Naive thymus-derived CD4-positive, alpha-beta T cell (primary cell): ENCODE measurements at regions of chr19 and their contacts with region 1.

Region 1: DNA sequence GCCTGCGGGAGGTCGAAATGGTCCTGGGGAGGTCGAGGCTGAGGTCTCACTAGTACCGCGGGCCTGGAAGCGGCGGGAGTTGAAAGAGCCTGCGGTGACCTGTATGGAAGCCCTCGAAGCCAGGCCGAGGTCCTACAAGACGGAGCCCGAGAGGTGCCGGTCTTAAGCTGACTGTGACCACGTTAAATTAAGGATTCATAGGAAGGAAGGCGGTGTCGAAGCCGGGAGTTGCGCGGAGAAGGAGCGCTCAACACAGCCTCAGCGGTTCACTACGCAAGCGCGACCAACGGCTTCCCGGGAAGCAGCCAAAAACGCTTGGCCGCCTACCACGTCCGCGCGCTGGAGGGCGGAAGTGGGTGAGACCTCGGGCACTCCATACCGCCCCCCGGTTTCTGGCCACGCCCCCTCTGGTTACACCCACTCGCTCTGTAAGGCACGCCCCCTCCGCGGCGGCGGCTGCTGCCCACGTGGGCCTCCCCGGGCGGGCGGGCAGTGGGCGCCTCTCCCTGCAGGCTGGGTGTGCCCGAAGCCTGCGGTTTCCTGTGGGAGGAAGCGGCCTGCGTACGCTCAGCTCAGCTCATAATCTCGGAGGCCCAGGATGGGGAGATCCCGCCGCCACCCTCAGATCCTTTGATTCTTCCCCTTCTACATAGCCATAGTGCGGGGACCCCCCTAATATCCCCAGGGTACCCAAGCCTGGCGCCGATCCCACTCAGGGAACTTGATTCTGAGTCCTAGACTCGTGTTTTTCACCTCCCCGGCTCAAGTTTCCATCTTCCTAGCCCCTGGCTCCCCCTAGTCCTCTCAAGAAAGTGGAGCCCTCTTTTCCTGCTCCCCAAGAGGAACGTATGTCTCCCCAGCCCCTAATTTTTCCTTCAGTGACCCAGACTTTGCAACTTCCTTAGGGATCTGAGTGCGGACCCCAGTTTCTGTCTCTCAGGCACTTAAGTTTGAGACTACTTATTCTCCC is 3.4 kb upstream of the EMP3 start:
- DNase-seq: peak; percentile 99 to 100 (median 100)
- ATAC-seq: peak; percentile 87
- H3K4me3 ChIP-seq: peak overlapping the region; percentile 79
- H3K4me3 Mint-ChIP-seq: peak overlapping the region; percentile 90 to 99 (median 96)
- H3K27ac ChIP-seq: peak overlapping the region; percentile 100
- H3K27ac Mint-ChIP-seq: peak overlapping the region; percentile 96 to 100 (median 99)
- H3K4me1 ChIP-seq: peaks cover 45 to 47% of the 10 kb centered on the region in 2 donors
- H3K4me1 Mint-ChIP-seq: peaks cover 36 to 63% (median 51%) of the 10 kb centered on the region in 7 donors
- H3K27me3 ChIP-seq: no peaks in the 10 kb centered on the region
- H3K27me3 Mint-ChIP-seq: peaks cover 0 to 2% (median 0%) of the 10 kb centered on the region in 5 donors

Region 2: DNA sequence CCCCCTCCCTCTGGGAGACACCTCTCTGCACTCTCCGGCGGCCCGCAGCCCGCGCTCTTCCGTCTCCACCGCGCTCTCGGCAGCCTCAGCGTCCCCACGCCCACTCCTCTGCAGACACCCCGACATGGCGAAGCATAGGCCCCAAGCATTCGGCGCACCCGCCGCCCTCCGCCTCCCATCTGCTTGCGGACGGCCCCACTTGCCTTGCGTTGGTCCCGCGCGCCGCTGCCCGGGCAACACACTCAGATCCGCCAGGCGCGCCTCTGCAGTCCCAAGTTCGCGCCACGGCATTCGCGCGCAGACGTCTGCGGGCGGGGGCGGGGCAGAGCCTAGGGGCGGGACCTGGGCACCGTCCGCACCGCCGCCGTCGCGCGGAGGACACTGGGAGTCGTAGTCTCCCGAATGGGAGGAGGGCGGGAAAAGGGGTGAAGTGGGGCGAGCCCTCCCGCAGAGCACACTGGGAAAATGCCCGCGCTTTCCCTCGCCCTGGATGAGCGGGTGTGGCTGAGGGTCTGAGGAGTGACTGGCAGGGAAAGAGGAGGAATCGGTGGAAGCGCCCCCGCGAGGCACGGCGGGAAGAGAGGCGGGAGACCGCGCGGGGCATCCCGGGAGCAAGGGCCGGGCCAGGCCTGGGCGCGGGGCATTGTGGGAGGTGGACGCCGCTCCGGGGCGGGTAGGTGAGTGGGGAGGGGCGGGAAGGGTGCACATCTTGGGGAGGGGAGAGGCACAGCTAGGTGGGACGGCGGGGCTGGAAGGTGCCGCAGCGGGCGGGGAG is 151.7 kb before region 1 on chr19 and contains the starts of genes LIG1 and ZSWIM9:
- CTCF ChIA-PET with region 1: no interaction called
- POLR2A ChIA-PET with region 1: no interaction called
- intact Hi-C with region 1: loop called (anchors 1 kb)
- DNase-seq: peak; percentile 87 to 96 (median 94)
- ATAC-seq: peak; percentile 89
- H3K4me3 ChIP-seq: peak within 1 kb of the TSS; percentile 98
- H3K4me3 Mint-ChIP-seq: peak within 1 kb of the TSS; percentile 90 to 100 (median 97)
- H3K27ac ChIP-seq: peak within 1 kb of the TSS; percentile 94
- H3K27ac Mint-ChIP-seq: peak within 1 kb of the TSS; percentile 92 to 100 (median 97)
- H3K4me1 ChIP-seq: peaks cover 14 to 16% of the 10 kb centered on the region in 2 donors
- H3K4me1 Mint-ChIP-seq: peaks cover 20 to 44% (median 32%) of the 10 kb centered on the region in 7 donors
- H3K27me3 ChIP-seq: no peaks in the 10 kb centered on the region
- H3K27me3 Mint-ChIP-seq: no peaks in the 10 kb centered on the region
- total RNA-seq, gene LIG1: 61.0 to 134 (median 122) TPM
- total RNA-seq, gene ZSWIM9: 5.0 to 11.6 (median 7.4) TPM

Region 3: GRCh38 chr19:48333467-48334384 is 11.8 kb after region 1 on chr19:
- CTCF ChIA-PET with region 1: interaction called, 217 read pairs
- POLR2A ChIA-PET with region 1: interaction called, 424 read pairs
- intact Hi-C with region 1: loop called (anchors 1 kb)
- DNase-seq: peak; percentile 90 to 96 (median 93)
- ATAC-seq: peak; percentile 77
- H3K4me3 ChIP-seq: peak overlapping the region; percentile 77
- H3K4me3 Mint-ChIP-seq: peak overlapping the region; percentile 83 to 100 (median 97)
- H3K27ac ChIP-seq: peak overlapping the region; percentile 95
- H3K27ac Mint-ChIP-seq: peak overlapping the region; percentile 93 to 100 (median 97)
- H3K4me1 ChIP-seq: peaks cover 32 to 43% of the 10 kb centered on the region in 2 donors
- H3K4me1 Mint-ChIP-seq: peaks cover 25 to 61% (median 47%) of the 10 kb centered on the region in 7 donors
- H3K27me3 ChIP-seq: no peaks in the 10 kb centered on the region
- H3K27me3 Mint-ChIP-seq: no peaks in the 10 kb centered on the region

Region 4: GRCh38 chr19:48445606-48446481 is 123.9 kb after region 1 on chr19 and contains the start of gene GRWD1:
- CTCF ChIA-PET with region 1: no interaction called
- POLR2A ChIA-PET with region 1: no interaction called
- intact Hi-C with region 1: loop called (anchors 1 kb)
- DNase-seq: peak; percentile 63 to 98 (median 93)
- ATAC-seq: peak; percentile 95
- H3K4me3 ChIP-seq: peak within 1 kb of the TSS; percentile 80
- H3K4me3 Mint-ChIP-seq: peak within 1 kb of the TSS; percentile 87 to 96 (median 93)
- H3K27ac ChIP-seq: peak within 1 kb of the TSS; percentile 83
- H3K27ac Mint-ChIP-seq: peak within 1 kb of the TSS; percentile 90 to 98 (median 95)
- H3K4me1 ChIP-seq: peaks cover 20 to 22% of the 10 kb centered on the region in 2 donors
- H3K4me1 Mint-ChIP-seq: peaks cover 19 to 44% (median 37%) of the 10 kb centered on the region in 7 donors
- H3K27me3 ChIP-seq: peaks cover 0 to 8% of the 10 kb centered on the region in 2 donors
- H3K27me3 Mint-ChIP-seq: peaks cover 12 to 33% (median 21%) of the 10 kb centered on the region in 5 donors
- total RNA-seq, gene GRWD1: 26.1 to 45.8 (median 36.3) TPM

Region 5: GRCh38 chr19:48588670-48589399 is 266.9 kb after region 1 on chr19:
- CTCF ChIA-PET with region 1: no interaction called
- POLR2A ChIA-PET with region 1: no interaction called
- intact Hi-C with region 1: loop called in 1 of 2 experiments (anchors 1 kb)
- DNase-seq: peak; percentile 65 to 92 (median 81)
- ATAC-seq: peak; percentile 92
- H3K4me3 ChIP-seq: no peak overlapping the region
- H3K4me3 Mint-ChIP-seq: peak overlapping the region; percentile 51 to 93 (median 78)
- H3K27ac ChIP-seq: no peak overlapping the region
- H3K27ac Mint-ChIP-seq: peak overlapping the region in 6 of 9 donors; percentile 37 to 86 (median 78)
- H3K4me1 ChIP-seq: peaks cover 0 to 3% of the 10 kb centered on the region in 2 donors
- H3K4me1 Mint-ChIP-seq: peaks cover 11 to 27% (median 15%) of the 10 kb centered on the region in 7 donors
- H3K27me3 ChIP-seq: no peaks in the 10 kb centered on the region
- H3K27me3 Mint-ChIP-seq: peaks cover 0 to 5% (median 0%) of the 10 kb centered on the region in 5 donors

Region 6: GRCh38 chr19:49590071-49590970 is 1268.4 kb after region 1 on chr19:
- CTCF ChIA-PET with region 1: no interaction called
- POLR2A ChIA-PET with region 1: no interaction called
- intact Hi-C with region 1: loop called in 1 of 2 experiments (anchors 5 kb)
- DNase-seq: peak; percentile 85 to 98 (median 97)
- ATAC-seq: peak; percentile 90
- H3K4me3 ChIP-seq: peak overlapping the region; percentile 97
- H3K4me3 Mint-ChIP-seq: peak overlapping the region; percentile 85 to 95 (median 94)
- H3K27ac ChIP-seq: peak overlapping the region; percentile 86
- H3K27ac Mint-ChIP-seq: peak overlapping the region; percentile 76 to 95 (median 93)
- H3K4me1 ChIP-seq: peaks cover 15 to 18% of the 10 kb centered on the region in 2 donors
- H3K4me1 Mint-ChIP-seq: peaks cover 26 to 42% (median 31%) of the 10 kb centered on the region in 7 donors
- H3K27me3 ChIP-seq: no peaks in the 10 kb centered on the region
- H3K27me3 Mint-ChIP-seq: peaks cover 0 to 12% (median 0%) of the 10 kb centered on the region in 5 donors